Activated T-helper 2 cell treated with anti-CD3 and anti-CD28 coated beads, Interferon-gamma antibody, Interleukin-2, Interleukin-4, amounts not matched to agents 10 μg/mL and 5 μg/mL and 100 μg/mL, durations not matched to agents 14 hours and 24 hours and 36 hours (primary cell): ENCODE measurements at regions of chr12 and their contacts with region 1.

Region 1: DNA sequence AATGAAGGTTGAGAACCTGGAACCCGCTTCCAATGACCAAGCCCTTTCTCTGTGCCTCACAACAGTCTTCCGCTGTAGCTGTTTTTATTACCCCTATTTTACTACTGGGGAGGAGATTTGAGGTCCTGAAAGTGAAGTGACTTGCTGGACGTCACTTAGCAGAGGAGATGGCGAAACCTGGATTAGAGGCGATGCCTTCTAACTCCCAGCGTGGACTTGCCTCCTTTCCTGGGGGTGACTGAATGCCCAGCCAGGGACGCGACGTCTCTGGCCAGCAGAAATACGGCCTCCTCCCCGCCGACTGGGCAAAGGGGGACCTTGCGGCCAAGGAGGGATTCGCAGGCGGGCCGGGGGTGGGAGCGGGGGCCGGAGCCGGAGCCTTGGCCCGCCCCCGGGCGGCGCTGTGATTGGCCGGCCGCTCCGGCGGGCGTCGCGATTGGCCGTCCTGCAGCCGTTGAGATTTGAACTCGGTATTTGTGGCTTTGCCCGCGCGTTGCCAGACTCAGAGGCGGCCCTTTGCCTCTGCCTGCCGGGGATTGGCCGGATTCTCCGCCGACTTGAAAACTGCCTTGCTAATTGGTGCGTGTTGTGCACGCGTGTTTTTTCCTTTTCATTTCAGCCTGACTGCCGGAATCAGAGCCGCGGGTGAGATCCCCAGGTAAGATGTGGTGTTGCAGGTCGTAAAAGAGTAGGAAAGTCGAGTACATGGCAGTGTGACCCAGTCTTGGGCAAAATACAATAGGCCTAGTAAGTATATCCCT is at the start of gene NCAPD2:
- DNase-seq: peak; percentile 97
- H3K4me3 Mint-ChIP-seq: peak within 1 kb of the TSS; percentile 93
- H3K27ac Mint-ChIP-seq: peak within 1 kb of the TSS; percentile 97
- H3K4me1 Mint-ChIP-seq: peaks cover 29% of the 10 kb centered on the region
- H3K27me3 Mint-ChIP-seq: no peaks in the 10 kb centered on the region
- total RNA-seq, gene NCAPD2: 114 and 120 TPM in 2 replicates

Region 2: DNA sequence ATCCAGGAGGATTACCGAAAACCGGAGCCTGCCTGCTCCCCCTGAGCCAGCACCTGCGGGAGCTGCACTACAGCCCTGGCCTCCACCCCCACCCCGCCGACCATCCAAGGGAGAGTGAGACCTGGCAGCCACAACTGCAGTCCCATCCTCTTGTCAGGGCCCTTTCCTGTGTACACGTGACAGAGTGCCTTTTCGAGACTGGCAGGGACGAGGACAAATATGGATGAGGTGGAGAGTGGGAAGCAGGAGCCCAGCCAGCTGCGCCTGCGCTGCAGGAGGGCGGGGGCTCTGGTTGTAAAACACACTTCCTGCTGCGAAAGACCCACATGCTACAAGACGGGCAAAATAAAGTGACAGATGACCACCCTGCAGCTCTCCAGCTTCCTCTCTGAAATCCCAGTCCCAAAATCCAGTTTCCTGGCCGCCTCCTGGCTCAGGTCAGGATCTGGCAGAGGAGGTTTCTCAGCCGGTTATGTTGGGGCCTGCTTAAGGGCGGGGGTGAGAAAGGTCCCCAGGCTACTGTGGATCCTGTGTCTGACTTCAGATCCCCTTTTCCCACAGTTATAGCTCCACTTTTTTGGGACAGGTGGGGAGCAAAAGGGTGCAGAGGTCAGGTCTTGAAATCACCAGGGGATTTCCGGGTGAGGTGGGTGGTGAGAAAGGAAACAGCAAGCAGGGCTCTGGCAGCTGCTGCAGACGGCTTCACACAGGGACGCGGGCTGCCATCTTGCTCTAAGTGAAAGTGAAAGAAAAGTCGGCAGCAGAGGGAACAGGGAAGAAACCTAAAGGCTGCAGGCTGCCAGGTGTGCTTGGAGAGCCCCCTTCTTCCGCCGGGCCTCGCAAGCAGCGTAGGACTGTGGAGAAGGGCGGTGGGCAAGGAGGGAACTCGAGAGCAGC is 42.1 kb before region 1 on chr12 and contains the start of gene TAPBPL:
- intact Hi-C with region 1: loop called (anchors 1 kb)
- DNase-seq: peak; percentile 78
- H3K4me3 Mint-ChIP-seq: peak within 1 kb of the TSS; percentile 92
- H3K27ac Mint-ChIP-seq: peak within 1 kb of the TSS; percentile 92
- H3K4me1 Mint-ChIP-seq: peaks cover 54% of the 10 kb centered on the region
- H3K27me3 Mint-ChIP-seq: no peaks in the 10 kb centered on the region
- total RNA-seq, gene TAPBPL: 30.9 and 37.4 TPM in 2 replicates

Region 3: DNA sequence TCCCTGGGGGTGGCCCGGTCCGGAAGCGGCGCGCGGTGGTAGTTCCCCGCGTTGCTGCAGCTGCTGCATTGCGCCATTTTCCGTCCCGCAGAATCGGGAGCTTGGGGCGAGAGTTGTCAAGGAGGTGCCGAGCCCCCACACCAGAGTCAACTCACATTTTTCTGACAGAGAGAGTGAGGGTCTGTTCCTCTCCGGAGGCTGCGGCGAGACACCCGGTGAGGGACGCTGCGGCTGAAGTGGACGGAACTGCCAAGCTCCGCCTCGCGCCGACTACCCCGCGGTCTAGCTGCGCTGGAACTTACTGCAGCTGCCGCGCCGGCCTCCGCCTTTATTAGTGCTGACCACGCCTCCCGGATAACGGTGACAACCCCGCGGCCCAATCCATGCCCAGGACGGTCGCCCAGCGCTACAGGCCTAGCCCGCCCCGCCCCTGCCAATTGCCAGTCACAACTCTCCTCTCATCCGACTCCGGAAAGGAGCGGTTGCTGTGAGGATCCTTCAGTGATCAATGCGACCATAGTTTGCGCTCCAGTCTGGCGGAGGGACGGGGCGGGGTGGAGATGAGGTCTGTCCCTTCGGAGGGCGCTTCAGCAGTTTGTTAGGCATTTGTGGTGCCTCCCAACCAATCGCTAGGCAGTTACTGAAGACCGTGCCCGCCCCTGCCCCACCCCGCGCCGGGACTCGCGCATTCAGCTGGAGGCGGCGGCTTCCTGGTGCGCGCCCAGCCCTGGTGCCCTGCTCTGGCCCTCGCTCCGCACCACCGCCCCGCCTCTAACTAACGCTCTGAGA is 23.1 kb before region 1 on chr12 and contains the start of gene VAMP1:
- intact Hi-C with region 1: loop called (anchors 1 kb)
- DNase-seq: peak; percentile 98
- H3K4me3 Mint-ChIP-seq: peak within 1 kb of the TSS; percentile 88
- H3K27ac Mint-ChIP-seq: peak within 1 kb of the TSS; percentile 86
- H3K4me1 Mint-ChIP-seq: peaks cover 47% of the 10 kb centered on the region
- H3K27me3 Mint-ChIP-seq: no peaks in the 10 kb centered on the region
- total RNA-seq, gene VAMP1: 38.7 and 40.7 TPM in 2 replicates